ENCODE measurements at regions of chr4 and their contacts with region 1.

Region 1: GRCh38 chr4:187617113-187617512 is 378.5 kb upstream of the ZFP42 start:
- DNase-seq: no peak
- ATAC-seq: no peak
- H3K4me3 Mint-ChIP-seq: no peak overlapping the region
- H3K27ac Mint-ChIP-seq: no peak overlapping the region
- H3K4me1 Mint-ChIP-seq: peaks cover 25% of the 10 kb centered on the region
- H3K27me3 Mint-ChIP-seq: no peaks in the 10 kb centered on the region
- CTCF ChIP-seq: no peak

Region 2: DNA sequence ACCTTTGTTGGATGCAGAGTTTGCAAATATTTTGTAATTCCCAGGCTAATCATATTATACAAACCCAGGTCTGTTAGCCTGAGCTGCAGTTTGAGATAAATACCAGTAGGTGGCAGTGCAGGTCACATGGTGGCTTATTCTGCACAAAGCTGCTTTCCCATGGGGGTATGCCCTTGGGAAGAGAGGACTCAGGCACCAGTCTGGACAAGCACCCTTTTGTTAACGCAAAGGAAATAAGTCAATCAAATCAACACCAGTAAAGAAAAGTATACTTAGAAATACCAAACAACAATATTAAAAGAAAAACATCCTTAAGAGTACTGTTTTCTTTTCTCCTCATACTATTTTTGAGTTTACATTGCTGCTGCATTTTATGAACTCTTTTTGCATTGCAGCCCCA is 10.5 kb before region 1 on chr4:
- CTCF ChIA-PET with region 1: interaction called, 12 read pairs
- POLR2A ChIA-PET with region 1: interaction called, 3 read pairs
- DNase-seq: peak; percentile 48
- ATAC-seq: peak; percentile 91
- H3K4me3 Mint-ChIP-seq: no peak overlapping the region
- H3K27ac Mint-ChIP-seq: no peak overlapping the region
- H3K4me1 Mint-ChIP-seq: peaks cover 37% of the 10 kb centered on the region
- H3K27me3 Mint-ChIP-seq: no peaks in the 10 kb centered on the region; the same call in 1 of the 2 replicates
- CTCF ChIP-seq: peak; percentile 87